ENCODE measurements at regions of chr4 and their contacts with region 1.

Region 1: DNA sequence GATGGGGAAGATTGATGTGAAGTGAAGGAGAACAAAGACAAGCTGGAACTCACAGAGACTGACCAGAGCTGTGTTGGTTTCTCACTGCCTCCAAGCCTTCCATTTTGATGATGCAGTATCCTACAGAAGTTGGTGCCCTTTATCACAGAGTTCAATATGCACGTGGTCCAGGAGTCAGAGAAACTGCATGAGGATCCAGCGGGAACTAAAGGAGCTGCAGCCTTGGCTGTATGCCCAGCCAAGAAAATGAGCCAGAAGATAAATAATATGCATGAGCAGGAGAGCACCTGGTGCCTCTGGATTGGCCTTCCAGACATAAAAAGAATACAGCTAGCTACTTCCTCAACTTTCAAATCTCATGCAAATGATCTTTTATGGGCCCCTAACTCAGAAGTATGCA is 44.3 kb upstream of the DCLK2 start:
- DNase-seq: no peak
- H3K4me3 ChIP-seq: no peak overlapping the region
- H3K27me3 ChIP-seq: no peaks in the 10 kb centered on the region
- CTCF ChIP-seq: no peak

Region 2: DNA sequence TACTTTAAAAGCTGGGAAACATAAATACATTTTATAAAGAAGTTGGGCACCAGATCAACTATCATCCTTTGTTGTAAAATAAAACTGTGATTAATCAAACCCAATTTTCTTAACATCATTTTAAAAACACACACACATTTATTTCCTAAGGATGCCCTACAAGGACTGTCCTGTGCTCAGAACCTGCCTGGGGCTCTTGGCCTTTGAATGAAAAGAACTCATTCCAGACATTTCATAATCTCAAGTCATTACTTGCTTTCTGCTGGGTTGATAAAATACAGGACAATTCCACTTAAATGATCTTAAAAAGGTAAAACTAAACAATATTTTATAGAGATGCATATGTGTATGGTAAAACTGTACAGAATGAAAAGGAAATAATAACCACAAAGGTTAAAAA is 1288.7 kb after region 1 on chr4:
- CTCF ChIA-PET with region 1: no interaction called
- POLR2A ChIA-PET with region 1: interaction called, 19 read pairs
- DNase-seq: peak; percentile 17
- H3K4me3 ChIP-seq: no peak overlapping the region
- H3K27me3 ChIP-seq: no peaks in the 10 kb centered on the region
- CTCF ChIP-seq: no peak